Activated CD8-positive, alpha-beta T cell treated with anti-CD3 and anti-CD28 coated beads for 36 hours (primary cell): ENCODE measurements at regions of chr11 and their contacts with region 1.

Region 1: DNA sequence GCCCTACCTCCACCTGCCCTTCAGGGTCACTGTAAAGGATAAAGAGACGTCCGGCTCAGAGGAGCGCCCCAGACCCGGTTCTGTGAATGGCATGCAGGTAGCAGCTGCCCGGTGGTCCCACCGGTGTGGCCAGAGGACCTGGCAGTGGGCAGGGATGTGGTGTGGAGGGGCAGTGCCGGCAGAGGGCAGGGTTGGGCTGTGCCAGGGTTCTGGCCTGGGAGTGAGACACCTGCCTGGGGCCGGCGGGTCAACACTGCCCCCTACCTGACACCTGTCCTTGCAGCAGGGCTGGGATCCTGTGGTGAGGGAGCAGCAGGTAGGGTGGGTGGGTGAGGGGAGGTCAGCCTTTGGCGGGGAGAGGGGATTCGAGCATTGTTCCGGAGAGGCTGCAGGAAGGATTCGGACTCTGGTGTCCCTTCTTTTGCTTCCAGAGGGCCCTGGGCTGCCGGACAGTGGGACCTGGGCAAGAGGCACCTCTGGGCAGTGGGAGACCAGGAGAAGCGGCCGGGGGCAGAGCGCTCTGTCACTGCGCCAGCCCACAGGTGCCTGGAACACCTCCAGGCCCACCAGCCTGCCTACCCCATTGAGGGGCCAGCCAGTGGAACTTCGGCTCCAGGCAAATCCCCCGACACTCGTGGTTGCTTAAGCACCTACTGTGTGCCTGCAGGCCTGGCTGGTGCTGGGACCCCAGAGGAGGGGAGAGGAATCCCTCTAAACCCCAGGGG is 1.6 kb upstream of the PHLDA2 start:
- DNase-seq: peak; percentile 68
- ATAC-seq: peak; percentile 17
- H3K4me3 Mint-ChIP-seq: peak overlapping the region; percentile 75
- H3K27ac Mint-ChIP-seq: peak overlapping the region; percentile 47
- H3K4me1 Mint-ChIP-seq: peaks cover 25% of the 10 kb centered on the region
- H3K27me3 Mint-ChIP-seq: peaks cover 25% of the 10 kb centered on the region
- CTCF ChIP-seq: peak; percentile 78

Region 2: GRCh38 chr11:2892215-2893020 is 38.4 kb before region 1 on chr11:
- CTCF ChIA-PET with region 1: interaction called, 22 read pairs
- POLR2A ChIA-PET with region 1: interaction called, 9 read pairs
- intact Hi-C with region 1: no loop called
- DNase-seq: peak; percentile 84
- ATAC-seq: peak; percentile 66
- H3K4me3 Mint-ChIP-seq: peak overlapping the region; percentile 83
- H3K27ac Mint-ChIP-seq: peak overlapping the region; percentile 91
- H3K4me1 Mint-ChIP-seq: peaks cover 17% of the 10 kb centered on the region
- H3K27me3 Mint-ChIP-seq: no peaks in the 10 kb centered on the region
- CTCF ChIP-seq: peak; percentile 96

Region 3: GRCh38 chr11:2901854-2902783 is 28.7 kb before region 1 on chr11:
- CTCF ChIA-PET with region 1: interaction called, 14 read pairs
- POLR2A ChIA-PET with region 1: interaction called, 5 read pairs
- intact Hi-C with region 1: no loop called
- DNase-seq: peak; percentile 97
- ATAC-seq: peak; percentile 93
- H3K4me3 Mint-ChIP-seq: peak overlapping the region; percentile 66
- H3K27ac Mint-ChIP-seq: no peak overlapping the region
- H3K4me1 Mint-ChIP-seq: peaks cover 29% of the 10 kb centered on the region
- H3K27me3 Mint-ChIP-seq: no peaks in the 10 kb centered on the region
- CTCF ChIP-seq: no peak

Region 4: DNA sequence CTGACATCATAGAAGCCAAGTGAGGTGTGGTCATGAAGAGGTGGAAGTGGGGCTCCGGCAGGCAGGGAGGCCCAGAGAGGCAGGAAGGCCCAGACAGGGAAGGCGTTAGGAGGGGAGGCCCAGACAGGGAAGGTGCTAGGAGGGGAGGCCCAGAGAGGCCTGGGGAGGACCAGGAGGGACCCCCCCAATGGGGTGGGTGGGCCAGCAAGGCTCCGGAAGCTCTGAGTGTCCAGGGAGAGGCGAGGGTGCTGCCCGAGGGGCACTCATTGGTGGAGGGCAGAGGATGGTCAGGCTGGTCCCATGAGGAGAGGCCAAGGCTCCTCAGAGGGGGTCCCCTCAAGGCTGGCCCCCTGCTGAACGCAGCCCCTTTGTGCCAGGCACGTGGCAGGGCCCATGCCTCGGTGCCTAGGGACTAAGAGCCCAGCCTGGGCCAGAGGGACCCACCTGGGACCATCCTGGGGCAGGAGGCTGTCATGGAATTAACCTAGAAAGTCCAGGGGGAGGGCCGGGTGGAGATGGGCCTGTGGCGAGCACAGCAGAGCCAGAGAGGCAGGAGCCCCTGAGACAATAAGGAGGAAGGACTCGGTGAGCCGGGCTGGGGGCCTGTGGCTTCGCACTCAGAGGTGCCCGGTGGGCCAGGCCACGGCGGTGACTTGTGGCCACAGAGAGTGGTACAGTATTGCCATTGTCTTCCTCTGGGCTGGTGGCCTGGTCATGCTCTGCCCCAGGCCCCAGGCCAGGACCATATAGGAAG is 13.8 kb before region 1 on chr11:
- CTCF ChIA-PET with region 1: interaction called, 11 read pairs
- POLR2A ChIA-PET with region 1: interaction called, 4 read pairs
- intact Hi-C with region 1: no loop called
- DNase-seq: no peak
- ATAC-seq: no peak
- H3K4me3 Mint-ChIP-seq: no peak overlapping the region
- H3K27ac Mint-ChIP-seq: no peak overlapping the region
- H3K4me1 Mint-ChIP-seq: peaks cover 7% of the 10 kb centered on the region
- H3K27me3 Mint-ChIP-seq: no peaks in the 10 kb centered on the region
- CTCF ChIP-seq: no peak